CD4-positive, alpha-beta T cell (primary cell): ENCODE measurements at regions of chr17 and their contacts with region 1.

Region 1: DNA sequence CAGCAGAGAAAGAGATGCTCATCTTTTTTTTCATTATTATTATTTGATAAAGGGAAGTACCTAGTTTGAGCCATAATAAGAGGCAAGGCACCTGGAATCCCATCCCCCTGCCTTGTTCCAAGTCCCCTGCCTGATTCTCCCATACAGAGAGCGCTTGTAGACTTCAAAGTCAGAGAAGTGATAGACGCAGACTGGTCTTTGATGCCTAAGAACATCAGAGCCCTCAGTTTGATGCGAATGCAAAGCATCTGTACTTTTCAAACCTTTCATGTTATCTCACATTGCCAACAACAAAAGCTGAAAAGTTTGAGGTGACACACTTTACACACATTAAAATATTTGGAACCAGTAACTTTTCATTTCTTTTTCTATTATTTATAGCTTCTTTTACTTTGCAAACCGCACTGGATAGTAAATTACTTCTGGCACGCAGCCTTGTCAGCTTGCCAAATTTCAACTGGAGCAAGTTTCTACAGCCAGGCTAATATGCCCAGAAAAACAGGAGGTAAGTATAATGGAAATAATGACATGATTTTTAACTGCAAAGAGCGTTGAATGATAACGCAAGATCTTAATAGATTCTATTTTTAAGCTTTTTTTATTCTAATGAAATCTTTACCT is 5.9 kb upstream of the UTP6 start:
- DNase-seq: peak in 2 of 14 experiments; percentile 35 to 51
- ATAC-seq: peak; percentile 68
- H3K4me3 ChIP-seq: no peak overlapping the region
- H3K4me3 Mint-ChIP-seq: no peak overlapping the region
- H3K27ac ChIP-seq: no peak overlapping the region
- H3K27ac Mint-ChIP-seq: no peak overlapping the region
- H3K4me1 ChIP-seq: no peaks in the 10 kb centered on the region
- H3K4me1 Mint-ChIP-seq: peaks cover 5% of the 10 kb centered on the region
- H3K27me3 ChIP-seq: peaks cover 0 to 6% of the 10 kb centered on the region in 2 experiments
- H3K27me3 Mint-ChIP-seq: peaks cover 6% of the 10 kb centered on the region
- CTCF ChIP-seq: no peak

Region 2: DNA sequence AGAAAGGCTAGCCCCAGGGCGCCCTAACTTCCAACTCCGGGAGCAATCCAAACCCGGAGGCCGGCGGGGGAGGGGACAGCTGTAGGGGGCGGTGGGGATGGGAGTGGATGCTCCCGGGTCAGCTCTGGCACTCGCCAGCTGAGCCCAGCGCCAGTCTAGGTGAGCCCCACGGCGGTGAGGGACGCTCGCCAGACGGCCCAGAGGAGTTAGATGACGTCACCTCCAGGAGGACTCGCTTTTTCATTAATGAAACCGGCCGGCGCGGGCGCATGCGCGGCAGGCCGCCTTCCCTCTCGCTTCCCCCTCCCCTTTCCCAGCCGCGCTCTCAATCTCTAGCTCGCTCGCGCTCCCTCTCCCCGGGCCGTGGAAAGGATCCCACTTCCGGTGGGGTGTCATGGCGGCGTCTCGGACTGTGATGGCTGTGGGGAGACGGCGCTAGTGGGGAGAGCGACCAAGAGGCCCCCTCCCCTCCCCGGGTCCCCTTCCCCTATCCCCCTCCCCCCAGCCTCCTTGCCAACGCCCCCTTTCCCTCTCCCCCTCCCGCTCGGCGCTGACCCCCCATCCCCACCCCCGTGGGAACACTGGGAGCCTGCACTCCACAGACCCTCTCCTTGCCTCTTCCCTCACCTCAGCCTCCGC is 812.7 kb before region 1 on chr17 and contains the start of gene NF1:
- CTCF ChIA-PET with region 1: no interaction called
- POLR2A ChIA-PET with region 1: no interaction called
- intact Hi-C with region 1: loop called in 1 of 2 experiments (anchors 10 kb)
- DNase-seq: peak; percentile 63 to 94 (median 80)
- ATAC-seq: peak; percentile 65
- H3K4me3 ChIP-seq: peak within 1 kb of the TSS; percentile 78
- H3K4me3 Mint-ChIP-seq: peak within 1 kb of the TSS; percentile 88
- H3K27ac ChIP-seq: peak within 1 kb of the TSS; percentile 61 to 65
- H3K27ac Mint-ChIP-seq: peak within 1 kb of the TSS; percentile 79
- H3K4me1 ChIP-seq: peaks cover 21% of the 10 kb centered on the region
- H3K4me1 Mint-ChIP-seq: peaks cover 12% of the 10 kb centered on the region
- H3K27me3 ChIP-seq: no peaks in the 10 kb centered on the region
- H3K27me3 Mint-ChIP-seq: no peaks in the 10 kb centered on the region
- CTCF ChIP-seq: no peak
- total RNA-seq, gene NF1: 15.5 to 18.7 TPM

Region 3: DNA sequence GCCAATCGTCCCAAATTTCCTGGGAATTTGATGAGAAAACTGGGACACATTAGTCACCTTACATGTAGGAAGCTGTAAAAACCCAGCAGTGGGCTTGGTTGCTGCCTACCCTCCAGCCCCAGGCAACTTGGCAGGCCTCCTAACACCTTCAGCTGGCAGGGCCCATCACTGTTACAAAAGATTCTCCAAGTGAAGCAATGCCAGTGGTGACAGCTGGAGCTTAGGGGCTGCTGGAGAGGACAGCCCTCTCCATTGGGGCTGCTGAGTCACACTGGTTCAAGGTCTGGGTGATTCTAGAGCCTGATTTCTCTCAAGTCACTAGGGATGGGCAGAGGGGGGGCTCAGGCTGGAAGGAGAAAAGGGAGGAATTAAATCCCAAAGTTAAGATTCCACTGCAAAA is 229.0 kb before region 1 on chr17:
- CTCF ChIA-PET with region 1: no interaction called
- POLR2A ChIA-PET with region 1: no interaction called
- intact Hi-C with region 1: no loop called
- DNase-seq: peak in 2 of 14 experiments; percentile 21 to 39
- ATAC-seq: no peak
- H3K4me3 ChIP-seq: no peak overlapping the region
- H3K4me3 Mint-ChIP-seq: no peak overlapping the region
- H3K27ac ChIP-seq: no peak overlapping the region
- H3K27ac Mint-ChIP-seq: no peak overlapping the region
- H3K4me1 ChIP-seq: no peaks in the 10 kb centered on the region
- H3K4me1 Mint-ChIP-seq: no peaks in the 10 kb centered on the region
- H3K27me3 ChIP-seq: peaks cover 12 to 18% of the 10 kb centered on the region in 2 experiments
- H3K27me3 Mint-ChIP-seq: peaks cover 58% of the 10 kb centered on the region
- CTCF ChIP-seq: no peak